Activated B cell treated with CpG ODN at 0.5 μM for 24 hours (primary cell): ENCODE measurements at regions of chr11 and their contacts with region 1.

Region 1: GRCh38 chr11:2992234-2992996 is at the start of gene NAP1L4:
- DNase-seq: peak; percentile 89
- ATAC-seq: peak; percentile 87
- H3K4me3 Mint-ChIP-seq: peak within 1 kb of the TSS; percentile 96
- H3K27ac Mint-ChIP-seq: peak within 1 kb of the TSS; percentile 95
- H3K4me1 Mint-ChIP-seq: peaks cover 42% of the 10 kb centered on the region
- H3K27me3 Mint-ChIP-seq: no peaks in the 10 kb centered on the region
- CTCF ChIP-seq: no peak
- total RNA-seq, gene NAP1L4: 112 and 115 TPM in 2 replicates

Region 2: DNA sequence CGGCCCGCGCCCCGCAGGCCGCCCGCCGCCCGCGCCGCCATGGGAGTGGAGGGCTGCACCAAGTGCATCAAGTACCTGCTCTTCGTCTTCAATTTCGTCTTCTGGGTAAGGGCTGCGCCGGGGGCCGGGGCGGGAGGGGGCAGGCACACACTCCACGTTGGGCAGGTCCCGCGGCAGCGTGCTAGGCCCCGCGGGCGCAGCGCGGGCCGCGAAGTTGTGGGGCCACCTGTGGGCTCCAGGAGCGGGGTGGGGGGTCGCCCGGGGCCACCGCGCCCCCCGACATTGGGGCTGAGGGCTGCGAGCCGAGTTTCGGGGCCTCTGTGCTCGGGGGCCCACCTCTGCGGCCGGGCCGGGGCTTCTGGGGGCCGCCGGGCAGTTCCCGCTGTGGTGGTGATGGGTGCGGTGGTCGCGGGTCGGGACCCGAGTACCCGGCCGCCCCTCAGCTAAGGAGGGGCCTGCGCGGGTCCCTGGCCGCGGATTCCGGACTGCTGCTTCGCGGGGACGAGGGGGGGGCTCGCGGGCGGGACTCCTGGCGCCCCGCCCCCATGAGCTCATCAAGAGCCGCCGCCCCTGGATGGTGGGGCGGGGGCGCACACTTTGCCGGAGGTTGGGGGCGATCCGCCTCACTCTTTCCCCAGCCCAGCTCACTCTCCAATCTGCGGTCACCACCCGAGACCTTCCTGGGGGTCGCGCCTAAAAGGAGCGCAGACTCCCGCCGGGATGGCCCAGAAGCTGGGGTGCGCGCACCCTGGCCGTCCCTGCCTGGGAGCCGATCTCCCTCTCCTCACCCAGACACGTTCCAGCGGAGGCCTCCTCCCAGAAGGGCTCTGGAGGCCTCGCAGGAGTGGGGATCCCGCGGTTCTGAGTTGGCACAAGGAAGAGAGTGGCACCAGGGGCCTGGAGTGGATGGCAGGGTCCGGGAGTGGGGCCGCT is 614.6 kb before region 1 on chr11:
- CTCF ChIA-PET with region 1: no interaction called
- POLR2A ChIA-PET with region 1: no interaction called
- intact Hi-C with region 1: loop called (anchors 5 kb)
- DNase-seq: no peak
- ATAC-seq: peak; percentile 43
- H3K4me3 Mint-ChIP-seq: peak overlapping the region; percentile 82
- H3K27ac Mint-ChIP-seq: peak overlapping the region; percentile 86
- H3K4me1 Mint-ChIP-seq: peaks cover 46% of the 10 kb centered on the region
- H3K27me3 Mint-ChIP-seq: no peaks in the 10 kb centered on the region
- CTCF ChIP-seq: no peak

Region 3: GRCh38 chr11:2699531-2700414 is 292.6 kb before region 1 on chr11 and contains the start of gene KCNQ1OT1:
- CTCF ChIA-PET with region 1: no interaction called
- POLR2A ChIA-PET with region 1: no interaction called
- intact Hi-C with region 1: loop called (anchors 2 kb)
- DNase-seq: peak; percentile 77
- ATAC-seq: peak; percentile 94
- H3K4me3 Mint-ChIP-seq: peak within 1 kb of the TSS; percentile 85
- H3K27ac Mint-ChIP-seq: peak within 1 kb of the TSS; percentile 70
- H3K4me1 Mint-ChIP-seq: peaks cover 47% of the 10 kb centered on the region
- H3K27me3 Mint-ChIP-seq: no peaks in the 10 kb centered on the region
- CTCF ChIP-seq: no peak
- total RNA-seq, gene KCNQ1OT1: 0.88 and 1.2 TPM in 2 replicates

Region 4: GRCh38 chr11:3021125-3021524 is 28.7 kb after region 1 on chr11:
- CTCF ChIA-PET with region 1: no interaction called
- POLR2A ChIA-PET with region 1: interaction called, 3 read pairs
- intact Hi-C with region 1: loop called (anchors 2 kb)
- DNase-seq: no peak
- ATAC-seq: no peak
- H3K4me3 Mint-ChIP-seq: no peak overlapping the region
- H3K27ac Mint-ChIP-seq: no peak overlapping the region
- H3K4me1 Mint-ChIP-seq: peaks cover 18% of the 10 kb centered on the region
- H3K27me3 Mint-ChIP-seq: no peaks in the 10 kb centered on the region
- CTCF ChIP-seq: no peak

Region 5: GRCh38 chr11:3057069-3057963 is 64.9 kb after region 1 on chr11 and contains the start of gene CARS1:
- CTCF ChIA-PET with region 1: no interaction called
- POLR2A ChIA-PET with region 1: interaction called, 4 read pairs
- intact Hi-C with region 1: loop called (anchors 1 kb)
- DNase-seq: peak; percentile 88
- ATAC-seq: peak; percentile 89
- H3K4me3 Mint-ChIP-seq: peak within 1 kb of the TSS; percentile 90
- H3K27ac Mint-ChIP-seq: peak within 1 kb of the TSS; percentile 85
- H3K4me1 Mint-ChIP-seq: peaks cover 36% of the 10 kb centered on the region
- H3K27me3 Mint-ChIP-seq: no peaks in the 10 kb centered on the region
- CTCF ChIP-seq: no peak
- total RNA-seq, gene CARS1: 95.9 and 110 TPM in 2 replicates